ENCODE measurements at regions of chr14 and their contacts with region 1.

Region 1: GRCh38 chr14:89493877-89494634 is 77.0 kb upstream of the FOXN3 start:
- DNase-seq: peak; percentile 23
- ATAC-seq: peak; percentile 99
- H3K4me3 Mint-ChIP-seq: peak overlapping the region; percentile 73
- H3K27ac Mint-ChIP-seq: peak overlapping the region; percentile 88
- H3K4me1 Mint-ChIP-seq: peaks cover 26% of the 10 kb centered on the region
- H3K27me3 Mint-ChIP-seq: no peaks in the 10 kb centered on the region
- CTCF ChIP-seq: no peak

Region 2: DNA sequence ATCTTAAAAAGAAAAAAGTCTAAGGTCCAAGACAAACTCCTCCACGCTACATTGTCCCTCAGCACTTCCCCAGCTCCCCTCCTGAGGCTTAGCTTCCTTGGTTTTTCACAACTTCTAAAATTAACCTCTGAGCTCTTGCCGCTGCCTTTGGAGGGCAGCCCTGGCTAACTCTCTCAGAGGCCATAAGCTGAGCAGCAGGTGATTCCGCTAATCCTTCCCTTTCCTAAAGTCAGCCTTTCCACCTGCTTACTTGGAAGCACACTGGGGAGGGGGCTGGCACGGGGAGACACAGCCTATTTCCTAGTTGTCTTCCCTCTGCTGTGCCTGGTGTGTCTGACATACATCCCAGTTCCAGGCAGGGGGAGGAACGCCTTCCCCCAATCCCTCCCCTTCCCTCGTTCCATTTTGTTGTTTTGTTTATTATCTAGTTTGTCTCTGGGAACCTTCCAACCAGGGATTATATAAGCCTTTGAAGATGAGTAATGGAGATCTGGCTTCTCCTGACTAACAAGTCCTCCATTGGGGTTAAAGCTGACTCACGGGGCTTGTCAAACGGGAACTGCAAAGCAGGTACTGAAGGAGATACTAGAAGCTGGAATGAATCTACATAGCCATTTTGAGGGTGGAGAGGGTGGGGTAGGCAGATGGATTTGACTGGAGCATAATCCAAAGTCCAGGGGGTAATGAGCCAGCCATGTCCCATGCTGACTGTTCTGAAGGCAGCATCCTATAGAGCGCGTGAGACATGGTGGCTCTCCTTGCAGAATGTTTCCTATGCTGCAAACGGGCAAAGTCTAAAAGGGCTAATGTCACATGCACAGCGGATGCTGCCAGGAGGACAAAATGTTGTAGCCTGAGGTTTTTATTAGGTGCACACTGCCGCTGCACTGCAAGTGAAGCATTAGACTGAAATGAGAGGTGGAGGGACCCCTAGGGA is 307.9 kb before region 1 on chr14:
- CTCF ChIA-PET with region 1: no interaction called
- POLR2A ChIA-PET with region 1: no interaction called
- intact Hi-C with region 1: loop called (anchors 2 kb)
- DNase-seq: no peak
- ATAC-seq: no peak
- H3K4me3 Mint-ChIP-seq: peak overlapping the region; percentile 69
- H3K27ac Mint-ChIP-seq: peak overlapping the region; percentile 91
- H3K4me1 Mint-ChIP-seq: peaks cover 41% of the 10 kb centered on the region
- H3K27me3 Mint-ChIP-seq: no peaks in the 10 kb centered on the region
- CTCF ChIP-seq: no peak

Region 3: GRCh38 chr14:89445273-89445973 is 48.6 kb before region 1 on chr14:
- CTCF ChIA-PET with region 1: interaction called, 4 read pairs
- POLR2A ChIA-PET with region 1: interaction called, 10 read pairs
- intact Hi-C with region 1: loop called (anchors 1 kb)
- DNase-seq: no peak
- ATAC-seq: peak; percentile 65
- H3K4me3 Mint-ChIP-seq: peak overlapping the region; percentile 55
- H3K27ac Mint-ChIP-seq: peak overlapping the region; percentile 85
- H3K4me1 Mint-ChIP-seq: peaks cover 78% of the 10 kb centered on the region
- H3K27me3 Mint-ChIP-seq: no peaks in the 10 kb centered on the region
- CTCF ChIP-seq: no peak

Region 4: GRCh38 chr14:89509891-89510290 is 15.8 kb after region 1 on chr14:
- CTCF ChIA-PET with region 1: no interaction called
- POLR2A ChIA-PET with region 1: interaction called, 20 read pairs
- intact Hi-C with region 1: loop called (anchors 1 kb)
- DNase-seq: no peak
- ATAC-seq: no peak
- H3K4me3 Mint-ChIP-seq: peak overlapping the region; percentile 81
- H3K27ac Mint-ChIP-seq: peak overlapping the region; percentile 93
- H3K4me1 Mint-ChIP-seq: peaks cover 42% of the 10 kb centered on the region
- H3K27me3 Mint-ChIP-seq: no peaks in the 10 kb centered on the region
- CTCF ChIP-seq: no peak

Region 5: DNA sequence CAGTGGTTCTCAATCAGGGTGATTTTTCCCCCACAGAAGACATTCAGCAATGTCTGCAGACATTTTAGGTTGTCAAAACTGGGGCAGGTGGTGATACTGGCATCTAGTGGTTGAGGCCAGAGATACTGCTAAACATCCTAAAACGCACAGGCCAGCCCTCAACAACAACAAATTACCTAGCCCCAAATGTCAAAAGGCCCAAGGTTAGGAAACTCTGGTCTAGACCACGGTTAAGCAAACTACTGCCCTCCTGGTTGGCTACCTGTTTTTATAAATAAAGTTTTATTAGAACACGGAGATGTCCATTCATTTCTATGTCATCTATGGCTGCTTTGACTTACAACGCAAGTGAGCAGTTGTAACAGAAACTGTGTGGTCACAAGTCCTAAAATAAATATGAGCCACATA is 273.8 kb after region 1 on chr14:
- CTCF ChIA-PET with region 1: no interaction called
- POLR2A ChIA-PET with region 1: no interaction called
- intact Hi-C with region 1: loop called (anchors 5 kb)
- DNase-seq: peak; percentile 28
- ATAC-seq: peak; percentile 92
- H3K4me3 Mint-ChIP-seq: no peak overlapping the region
- H3K27ac Mint-ChIP-seq: peak overlapping the region; percentile 67
- H3K4me1 Mint-ChIP-seq: peaks cover 31% of the 10 kb centered on the region
- H3K27me3 Mint-ChIP-seq: no peaks in the 10 kb centered on the region
- CTCF ChIP-seq: peak; percentile 20